ENCODE measurements at regions of chr19 and their contacts with region 1.

Region 1: DNA sequence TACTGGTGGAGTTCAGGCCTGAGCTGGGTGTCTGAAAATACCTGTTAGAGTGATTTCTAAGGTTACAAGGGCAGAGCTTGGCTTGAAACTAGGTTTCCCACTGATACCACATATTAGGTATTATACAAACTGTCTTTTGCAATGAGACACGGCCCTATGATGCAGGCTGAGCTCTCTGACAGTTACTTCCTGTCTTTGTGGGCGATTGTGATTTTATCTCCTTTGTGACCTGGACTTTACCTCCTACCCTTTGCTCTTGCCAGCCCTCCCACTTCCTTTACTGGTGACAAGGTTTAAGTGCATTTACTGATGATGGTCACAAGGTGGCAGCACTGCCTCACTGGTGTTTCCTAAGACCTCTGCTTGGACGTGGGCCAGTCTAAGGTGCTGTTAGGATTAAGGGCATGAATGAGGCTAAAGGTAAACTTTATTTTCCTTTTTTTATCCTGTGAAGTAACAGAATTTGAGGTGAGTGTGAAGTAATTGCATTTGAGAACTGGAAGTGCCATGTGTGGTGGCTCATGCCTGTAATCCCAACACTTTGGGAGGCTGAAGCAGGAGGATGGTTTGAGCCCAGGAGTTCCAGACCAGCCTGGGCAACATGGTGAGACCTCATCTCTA is 7.7 kb upstream of the CXCL17 start:
- DNase-seq: peak; percentile 92
- ATAC-seq: peak; percentile 99
- H3K4me3 Mint-ChIP-seq: no peak overlapping the region
- H3K27ac Mint-ChIP-seq: no peak overlapping the region
- H3K4me1 Mint-ChIP-seq: peaks cover 41% of the 10 kb centered on the region
- H3K27me3 Mint-ChIP-seq: no peaks in the 10 kb centered on the region

Region 2: DNA sequence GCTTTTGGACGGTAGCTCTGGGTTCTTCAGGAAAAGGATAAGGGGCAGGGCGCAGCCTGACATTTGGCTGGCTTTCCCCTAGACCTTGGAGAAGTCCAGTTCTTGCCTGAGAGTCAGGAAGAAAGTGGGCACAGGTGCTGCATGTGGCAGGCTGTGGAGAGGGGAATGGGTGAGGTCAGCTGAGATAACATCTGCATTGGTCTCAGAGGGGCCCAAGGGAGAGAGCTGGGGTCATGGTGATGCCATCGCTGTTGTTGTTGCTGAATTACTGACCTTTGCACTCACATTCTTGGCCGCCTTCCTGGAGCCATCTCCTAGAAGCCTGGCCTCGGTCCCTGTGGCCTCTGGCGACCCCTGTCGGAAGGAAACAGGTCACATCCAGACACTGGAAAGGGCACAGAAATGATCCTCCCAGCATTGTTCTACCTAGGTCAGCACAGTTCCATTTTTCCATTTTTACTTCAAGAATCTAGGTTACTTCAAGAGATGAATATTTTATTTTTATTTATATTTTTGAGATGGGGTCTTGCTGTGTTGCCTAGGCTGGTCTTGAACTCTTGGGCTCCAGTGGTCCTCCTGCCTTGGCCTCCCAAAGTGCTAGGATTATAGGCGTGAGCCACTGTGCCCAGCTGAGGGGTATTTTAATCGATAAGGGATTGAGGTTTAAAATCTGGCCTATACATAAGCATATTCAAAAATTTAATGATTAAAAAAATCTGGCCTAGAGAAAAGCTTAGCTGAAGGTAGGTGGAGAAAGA is 16.7 kb before region 1 on chr19:
- CTCF ChIA-PET with region 1: interaction called, 49 read pairs
- POLR2A ChIA-PET with region 1: interaction called, 6 read pairs
- DNase-seq: peak; percentile 73
- ATAC-seq: peak; percentile 70
- H3K4me3 Mint-ChIP-seq: no peak overlapping the region
- H3K27ac Mint-ChIP-seq: no peak overlapping the region
- H3K4me1 Mint-ChIP-seq: peaks cover 10% of the 10 kb centered on the region
- H3K27me3 Mint-ChIP-seq: no peaks in the 10 kb centered on the region

Region 3: GRCh38 chr19:42471554-42472249 is 21.3 kb after region 1 on chr19:
- CTCF ChIA-PET with region 1: interaction called, 27 read pairs
- POLR2A ChIA-PET with region 1: no interaction called
- DNase-seq: no peak
- ATAC-seq: no peak
- H3K4me3 Mint-ChIP-seq: no peak overlapping the region
- H3K27ac Mint-ChIP-seq: no peak overlapping the region
- H3K4me1 Mint-ChIP-seq: peaks cover 33% of the 10 kb centered on the region
- H3K27me3 Mint-ChIP-seq: peaks cover 3% of the 10 kb centered on the region

Region 4: DNA sequence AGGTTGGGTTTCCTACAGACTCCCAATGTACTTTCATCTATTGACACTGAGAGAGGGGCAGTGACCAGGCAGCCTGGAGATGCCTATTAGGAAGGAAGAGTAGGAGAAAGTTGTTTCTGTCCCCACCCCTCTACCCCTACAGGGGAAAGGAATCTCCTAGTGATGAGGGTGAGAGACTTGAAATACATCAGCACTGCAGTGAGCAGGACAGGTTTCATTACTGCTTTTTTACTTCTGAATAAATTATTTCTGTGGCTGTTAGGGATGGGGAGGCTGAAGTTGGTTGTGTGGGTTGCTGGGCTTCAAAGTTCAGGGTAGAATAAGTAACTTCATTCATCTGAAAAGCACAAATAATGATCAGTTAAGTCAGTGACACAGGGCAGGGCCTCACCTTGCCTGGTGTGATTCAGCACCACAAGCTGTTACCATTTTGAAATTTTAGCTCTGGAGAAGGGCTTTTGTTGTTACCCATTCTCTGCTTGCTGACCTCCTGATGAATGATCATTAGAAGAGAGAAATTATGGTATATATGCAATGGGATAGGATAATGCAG is 58.5 kb after region 1 on chr19:
- CTCF ChIA-PET with region 1: interaction called, 24 read pairs
- POLR2A ChIA-PET with region 1: no interaction called
- DNase-seq: no peak
- ATAC-seq: no peak
- H3K4me3 Mint-ChIP-seq: no peak overlapping the region
- H3K27ac Mint-ChIP-seq: no peak overlapping the region
- H3K4me1 Mint-ChIP-seq: peaks cover 31% of the 10 kb centered on the region
- H3K27me3 Mint-ChIP-seq: no peaks in the 10 kb centered on the region

Region 5: DNA sequence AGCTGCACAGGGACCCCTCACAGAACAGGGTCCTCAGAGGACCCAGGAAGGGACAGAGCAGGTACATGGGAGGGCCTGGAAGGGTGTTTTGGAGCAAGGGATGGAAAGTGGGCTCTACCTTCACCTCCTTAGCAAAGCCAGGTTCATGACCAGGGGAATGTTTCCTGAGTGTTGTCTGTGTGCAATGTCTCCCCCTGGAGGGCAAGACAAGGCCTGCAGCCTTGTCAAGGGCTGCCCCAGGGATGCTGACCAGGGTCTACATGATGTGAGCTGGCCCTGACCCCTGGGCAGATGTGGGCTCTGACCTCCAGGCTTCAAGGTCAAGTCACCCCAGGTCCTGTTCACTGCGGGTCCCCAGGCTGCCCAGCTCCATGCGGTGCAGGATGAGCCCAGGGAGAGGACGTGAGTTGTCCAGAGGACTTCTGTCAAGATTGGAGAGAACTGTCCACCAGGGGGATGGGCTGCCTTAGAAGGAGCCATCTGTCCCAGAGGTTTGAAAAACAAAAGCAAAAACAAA is 78.9 kb after region 1 on chr19:
- CTCF ChIA-PET with region 1: interaction called, 209 read pairs
- POLR2A ChIA-PET with region 1: interaction called, 20 read pairs
- DNase-seq: peak; percentile 80
- ATAC-seq: peak; percentile 75
- H3K4me3 Mint-ChIP-seq: peak overlapping the region; percentile 77
- H3K27ac Mint-ChIP-seq: peak overlapping the region; percentile 90
- H3K4me1 Mint-ChIP-seq: peaks cover 49% of the 10 kb centered on the region
- H3K27me3 Mint-ChIP-seq: no peaks in the 10 kb centered on the region

Region 6: DNA sequence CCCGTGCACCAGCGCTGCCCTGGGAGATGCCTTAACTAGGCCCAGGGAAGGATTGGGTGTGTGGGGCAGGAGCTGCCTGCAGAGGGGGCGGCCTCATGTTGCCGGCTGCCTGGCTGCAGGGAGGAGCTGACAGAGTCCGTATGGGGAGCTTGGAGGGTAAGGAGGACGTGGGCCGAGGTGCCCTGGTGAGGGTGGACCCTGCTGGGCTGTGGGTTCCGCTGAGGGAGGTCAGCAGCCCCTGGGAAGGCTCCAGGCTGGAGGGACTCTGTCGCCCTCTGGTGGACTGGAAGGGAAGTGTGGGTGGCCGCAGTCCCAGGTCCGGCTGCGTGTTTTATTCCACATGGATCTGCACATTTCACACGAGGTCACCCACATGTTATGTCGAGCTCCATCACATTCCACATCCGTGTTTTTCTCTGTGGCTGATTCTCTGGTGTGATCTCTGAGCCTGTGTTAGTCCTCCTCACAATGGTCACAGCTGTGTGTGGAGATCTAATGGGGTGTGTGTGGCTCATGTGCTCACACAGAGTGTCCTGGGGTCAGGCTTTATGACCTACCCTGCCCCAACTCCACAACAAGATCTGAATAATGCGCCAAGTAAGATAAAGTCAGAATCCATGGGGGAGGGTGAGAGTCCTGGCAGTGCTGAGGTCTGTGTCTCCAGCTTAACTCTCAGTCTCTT is 146.1 kb after region 1 on chr19:
- CTCF ChIA-PET with region 1: interaction called, 20 read pairs
- POLR2A ChIA-PET with region 1: no interaction called
- DNase-seq: peak; percentile 40
- ATAC-seq: no peak
- H3K4me3 Mint-ChIP-seq: no peak overlapping the region
- H3K27ac Mint-ChIP-seq: no peak overlapping the region
- H3K4me1 Mint-ChIP-seq: no peaks in the 10 kb centered on the region
- H3K27me3 Mint-ChIP-seq: peaks cover 14% of the 10 kb centered on the region